ENCODE measurements at regions of chr14 and their contacts with region 1.

Region 1: DNA sequence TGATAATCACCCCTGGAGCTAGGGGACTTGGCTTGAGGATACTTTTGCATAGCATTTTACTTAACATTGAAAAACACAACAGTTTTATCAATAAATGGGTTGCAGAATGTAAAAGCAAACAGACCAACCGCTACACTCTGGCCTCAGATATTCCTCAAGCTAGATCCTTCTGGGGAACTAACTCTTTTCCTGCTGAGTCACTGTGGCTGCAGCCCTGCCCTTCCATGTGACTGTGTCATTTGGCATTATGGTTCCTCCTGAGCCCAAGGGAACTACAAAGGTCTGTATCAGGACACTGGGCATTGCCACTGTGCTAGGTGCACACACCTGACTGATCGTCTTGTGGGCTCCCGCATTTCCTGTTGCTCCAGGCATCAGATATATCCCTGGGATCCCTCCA is 56.6 kb downstream of the TTC9 start:
- DNase-seq: no peak
- H3K4me3 ChIP-seq: no peak overlapping the region
- H3K27ac ChIP-seq: no peak overlapping the region
- H3K4me1 ChIP-seq: no peaks in the 10 kb centered on the region
- H3K27me3 ChIP-seq: no peaks in the 10 kb centered on the region
- CTCF ChIP-seq: no peak
- EP300 ChIP-seq: no peak
- POLR2A ChIP-seq: no peak

Region 2: DNA sequence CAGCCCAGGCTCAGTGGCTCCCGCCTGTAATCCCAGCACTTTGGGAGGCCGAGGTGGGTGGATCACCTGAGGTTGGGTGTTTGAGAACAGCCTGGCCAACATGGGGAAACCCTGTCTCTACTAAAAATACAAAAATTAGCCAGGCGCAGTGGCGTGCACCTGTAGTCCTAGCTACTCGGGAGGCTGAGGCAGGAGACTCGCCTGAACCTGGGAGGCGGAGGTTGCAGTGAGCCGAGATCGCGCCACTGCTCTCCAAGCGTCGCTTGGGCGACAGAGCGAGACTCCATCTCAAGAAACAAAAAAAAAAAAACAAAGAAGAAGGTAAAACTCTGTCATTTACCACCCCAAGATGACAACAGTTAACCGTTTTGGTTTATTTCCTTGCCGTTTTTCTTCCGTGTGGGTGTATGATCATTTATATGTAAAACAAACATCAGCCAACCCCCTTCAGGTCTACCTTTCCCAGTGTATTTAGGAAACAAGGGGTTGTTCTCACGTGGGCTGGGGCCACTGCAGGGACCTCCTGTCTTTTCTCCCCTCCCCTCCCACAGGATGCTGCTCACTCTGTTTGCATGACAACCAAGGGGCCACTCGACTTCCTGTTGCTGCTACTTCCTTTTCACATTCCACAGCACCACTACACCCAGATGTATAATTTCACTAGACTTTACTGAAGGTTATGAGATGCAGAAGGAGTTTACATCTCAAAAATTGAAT is 43.0 kb before region 1 on chr14:
- intact Hi-C with region 1: no loop called
- DNase-seq: no peak
- H3K4me3 ChIP-seq: no peak overlapping the region
- H3K27ac ChIP-seq: no peak overlapping the region
- H3K4me1 ChIP-seq: no peaks in the 10 kb centered on the region
- H3K27me3 ChIP-seq: no peaks in the 10 kb centered on the region
- CTCF ChIP-seq: no peak
- EP300 ChIP-seq: no peak
- POLR2A ChIP-seq: no peak

Region 3: DNA sequence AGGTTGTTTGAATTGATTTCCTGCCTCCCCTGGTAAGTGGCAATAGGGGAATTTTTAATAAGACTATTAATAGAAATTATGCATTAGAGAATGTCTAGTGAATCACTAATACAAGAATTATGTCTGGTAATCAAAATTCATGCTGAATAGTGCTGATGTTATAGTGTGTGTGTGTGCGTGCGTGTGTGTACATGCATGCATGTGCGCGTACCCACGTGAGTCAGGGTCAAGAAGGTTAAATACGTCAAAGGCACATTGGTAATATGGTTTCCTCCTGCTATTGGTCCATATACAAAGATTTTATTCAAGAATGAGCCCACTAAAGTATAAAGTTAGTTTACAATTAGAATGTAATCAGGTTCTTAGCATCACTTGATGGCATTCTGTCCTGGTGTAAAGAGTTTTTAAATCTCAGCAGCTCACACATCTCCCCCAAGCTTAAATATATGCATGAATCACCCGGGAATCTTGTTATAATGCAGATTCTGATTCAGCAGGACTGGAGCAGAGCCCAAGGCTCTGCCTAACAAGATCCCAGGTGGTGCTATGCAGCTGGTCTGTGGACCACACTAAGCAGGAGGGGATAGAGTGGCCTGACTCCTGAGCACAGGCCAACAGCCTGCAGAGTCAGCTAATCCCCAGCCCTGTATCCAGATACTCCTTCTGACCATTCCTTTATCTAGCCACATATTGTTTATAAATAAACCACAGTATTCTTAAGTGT is 12.7 kb before region 1 on chr14:
- intact Hi-C with region 1: no loop called
- DNase-seq: no peak
- H3K4me3 ChIP-seq: no peak overlapping the region
- H3K27ac ChIP-seq: no peak overlapping the region
- H3K4me1 ChIP-seq: no peaks in the 10 kb centered on the region
- H3K27me3 ChIP-seq: no peaks in the 10 kb centered on the region
- CTCF ChIP-seq: no peak
- EP300 ChIP-seq: no peak
- POLR2A ChIP-seq: no peak

Region 4: GRCh38 chr14:70722418-70722817 is 24.1 kb after region 1 on chr14:
- intact Hi-C with region 1: loop called in 1 of 4 experiments (anchors 2 kb)
- DNase-seq: no peak
- H3K4me3 ChIP-seq: no peak overlapping the region
- H3K27ac ChIP-seq: no peak overlapping the region
- H3K4me1 ChIP-seq: no peaks in the 10 kb centered on the region
- H3K27me3 ChIP-seq: no peaks in the 10 kb centered on the region
- CTCF ChIP-seq: no peak
- EP300 ChIP-seq: no peak
- POLR2A ChIP-seq: no peak

Region 5: DNA sequence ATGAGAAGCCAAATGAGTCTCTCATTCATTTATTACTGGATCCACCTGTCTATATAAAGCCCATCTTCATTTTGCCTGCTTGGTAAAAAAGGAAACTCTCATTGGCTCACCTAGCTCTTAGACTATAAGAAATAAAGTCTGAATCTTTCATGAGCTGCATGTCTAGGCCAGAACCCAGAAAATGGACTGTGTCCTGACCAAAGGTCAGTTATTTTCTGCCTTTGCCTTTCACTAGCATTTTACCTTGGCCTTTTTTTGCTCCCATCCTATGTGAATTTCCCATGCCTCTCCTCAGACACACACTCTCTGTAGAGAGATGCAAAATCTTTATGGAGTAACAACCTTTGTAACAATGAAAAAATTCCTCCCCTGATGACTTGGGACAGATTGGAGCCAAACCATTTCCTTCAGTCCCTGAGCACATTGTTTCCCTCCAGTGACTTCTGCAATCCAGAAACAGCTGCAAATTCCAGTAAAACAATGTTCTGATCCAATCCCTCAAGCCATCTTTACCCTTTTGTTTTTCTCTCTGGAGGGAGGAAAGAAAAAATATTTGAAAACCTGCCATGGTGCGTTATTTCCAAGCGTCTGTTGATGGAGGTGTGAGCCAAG is 144.7 kb after region 1 on chr14:
- intact Hi-C with region 1: no loop called
- DNase-seq: no peak
- H3K4me3 ChIP-seq: no peak overlapping the region
- H3K27ac ChIP-seq: no peak overlapping the region
- H3K4me1 ChIP-seq: peaks cover 1% of the 10 kb centered on the region
- H3K27me3 ChIP-seq: no peaks in the 10 kb centered on the region
- CTCF ChIP-seq: no peak
- EP300 ChIP-seq: no peak
- POLR2A ChIP-seq: no peak